SK-N-SH (cell line): ENCODE measurements at regions of chr4 and their contacts with region 1.

Region 1: GRCh38 chr4:8403173-8403753 is 37.3 kb downstream of the ACOX3 start:
- DNase-seq: peak; percentile 96
- H3K4me3 ChIP-seq: no peak overlapping the region
- H3K27ac ChIP-seq: peak overlapping the region in 1 of 2 experiments; percentile 66; a peak in 2 of 4 replicates
- H3K4me1 ChIP-seq: peaks cover 0 to 14% of the 10 kb centered on the region in 2 experiments; a peak in 1 of 4 replicates
- H3K27me3 ChIP-seq: no peaks in the 10 kb centered on the region
- CTCF ChIP-seq: peak; percentile 98
- EP300 ChIP-seq: no peak
- RAD21 ChIP-seq: peak; percentile 99

Region 2: DNA sequence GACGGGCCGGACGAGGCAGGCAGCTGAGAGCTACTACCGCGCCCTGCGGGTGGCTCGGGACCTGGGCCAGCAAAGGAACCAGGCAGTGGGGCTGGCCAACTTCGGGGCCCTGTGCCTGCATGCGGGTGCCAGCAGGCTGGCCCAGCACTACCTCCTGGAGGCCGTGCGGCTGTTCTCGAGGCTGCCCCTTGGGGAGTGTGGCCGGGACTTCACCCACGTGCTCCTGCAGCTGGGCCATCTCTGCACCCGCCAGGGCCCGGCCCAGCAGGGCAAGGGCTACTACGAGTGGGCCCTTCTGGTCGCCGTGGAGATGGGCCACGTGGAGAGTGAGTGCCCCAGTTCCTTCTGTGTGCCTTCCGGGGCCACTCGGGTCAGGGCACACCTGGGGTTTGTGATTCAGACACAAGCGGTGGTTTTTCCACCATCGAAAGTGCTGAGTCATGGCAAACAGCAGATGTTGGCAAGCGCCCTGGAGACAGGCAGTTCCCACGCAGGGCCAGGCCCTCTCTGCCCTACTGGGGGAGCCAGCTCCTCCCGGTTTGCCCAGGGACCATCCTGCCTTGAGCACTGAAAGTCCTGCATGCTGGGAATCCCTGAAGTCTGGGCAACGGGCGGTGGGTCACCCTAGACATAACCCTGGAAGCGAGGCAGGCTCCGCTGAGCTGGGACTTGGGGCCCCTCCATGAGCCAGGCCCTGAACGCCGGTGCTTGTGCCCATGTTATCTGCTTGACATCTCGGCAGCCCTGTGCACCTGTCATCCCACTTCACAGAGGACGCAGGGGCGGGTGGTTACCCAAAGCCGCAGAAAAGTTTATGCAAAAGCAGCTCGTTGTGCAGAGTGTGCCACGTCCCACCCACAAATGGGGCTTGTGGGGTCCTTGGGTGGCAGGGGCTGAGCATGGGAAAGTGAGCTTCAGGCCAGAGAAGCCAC is 174.7 kb before region 1 on chr4:
- CTCF ChIA-PET with region 1: interaction called, 10 read pairs
- POLR2A ChIA-PET with region 1: no interaction called
- DNase-seq: no peak
- H3K4me3 ChIP-seq: no peak overlapping the region
- H3K27ac ChIP-seq: peak overlapping the region in 1 of 2 experiments; percentile 17; a peak in 1 of 4 replicates
- H3K4me1 ChIP-seq: peaks cover 0 to 22% of the 10 kb centered on the region in 2 experiments; a peak in 1 of 4 replicates
- H3K27me3 ChIP-seq: no peaks in the 10 kb centered on the region
- CTCF ChIP-seq: no peak
- EP300 ChIP-seq: no peak
- RAD21 ChIP-seq: no peak

Region 3: GRCh38 chr4:8252301-8253173 is 150.7 kb before region 1 on chr4:
- CTCF ChIA-PET with region 1: interaction called, 12 read pairs
- POLR2A ChIA-PET with region 1: no interaction called
- DNase-seq: no peak
- H3K4me3 ChIP-seq: no peak overlapping the region
- H3K27ac ChIP-seq: no peak overlapping the region
- H3K4me1 ChIP-seq: peaks cover 0 to 7% of the 10 kb centered on the region in 2 experiments; a peak in 1 of 4 replicates
- H3K27me3 ChIP-seq: no peaks in the 10 kb centered on the region
- CTCF ChIP-seq: no peak
- EP300 ChIP-seq: no peak
- RAD21 ChIP-seq: no peak

Region 4: DNA sequence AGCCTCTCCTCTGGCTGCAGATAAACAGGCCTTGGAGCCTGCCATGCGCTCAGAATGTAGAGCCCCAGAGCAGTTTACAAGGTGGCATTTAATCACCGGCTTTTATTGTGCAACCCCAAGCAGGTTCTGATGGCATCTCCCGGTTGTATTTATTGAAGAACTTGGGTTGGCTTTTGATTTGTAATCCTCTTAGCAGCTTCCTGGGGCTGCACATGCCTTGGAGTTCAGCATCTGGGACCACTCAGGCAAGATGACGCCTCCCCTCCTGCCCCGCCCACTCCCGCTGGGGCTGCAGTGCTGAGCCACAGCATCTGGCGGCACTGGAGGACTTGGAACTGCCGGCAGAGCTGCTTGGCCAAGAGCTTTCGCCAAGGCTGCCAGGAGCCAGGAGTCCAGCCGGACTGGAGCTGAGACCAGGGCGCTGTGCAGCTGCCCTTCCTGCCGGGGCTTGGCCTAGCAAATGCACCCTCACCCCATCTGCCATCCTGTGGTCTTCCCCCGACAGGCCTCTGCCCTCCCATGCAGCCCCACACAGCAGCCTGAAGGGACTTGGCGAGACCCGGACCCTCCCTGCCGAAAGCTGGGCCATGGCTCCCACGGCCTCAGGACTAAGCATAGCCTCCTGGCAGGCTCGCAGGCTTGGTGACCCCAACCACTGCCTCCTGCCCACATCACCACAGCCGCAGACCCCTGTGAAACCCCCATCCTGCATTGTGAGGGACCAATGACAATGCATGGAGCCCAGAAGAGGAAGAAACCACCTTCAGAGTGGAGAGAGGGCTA is 128.3 kb before region 1 on chr4:
- CTCF ChIA-PET with region 1: interaction called, 40 read pairs
- POLR2A ChIA-PET with region 1: no interaction called
- DNase-seq: peak; percentile 95
- H3K4me3 ChIP-seq: no peak overlapping the region
- H3K27ac ChIP-seq: peak overlapping the region; percentile 55 to 93; a peak in 3 of 4 replicates
- H3K4me1 ChIP-seq: peaks cover 38 to 39% of the 10 kb centered on the region in 2 experiments
- H3K27me3 ChIP-seq: no peaks in the 10 kb centered on the region
- CTCF ChIP-seq: peak; percentile 60
- EP300 ChIP-seq: peak in 1 of 2 experiments; percentile 43; a peak in 1 of 4 replicates
- RAD21 ChIP-seq: peak; percentile 85

Region 5: DNA sequence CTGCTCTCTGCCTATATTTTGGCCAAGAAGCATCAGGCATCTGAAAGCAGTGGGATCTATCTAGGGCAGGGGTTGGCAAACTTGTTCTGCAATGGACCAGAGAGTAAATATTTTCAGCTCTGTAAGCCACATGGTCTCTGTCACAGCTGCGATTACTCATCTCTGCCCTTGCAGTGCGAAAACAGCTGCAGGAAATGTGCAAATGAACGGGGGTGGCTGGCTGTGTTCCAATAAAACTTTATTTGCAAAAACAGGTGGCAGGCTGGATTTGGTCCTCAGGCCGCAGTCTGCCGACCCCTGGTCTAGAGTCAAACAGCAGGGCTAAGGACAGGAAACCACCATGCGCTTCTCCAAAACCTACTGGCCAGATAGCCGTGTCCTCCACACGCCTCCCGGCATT is 11.3 kb before region 1 on chr4:
- CTCF ChIA-PET with region 1: interaction called, 26 read pairs
- POLR2A ChIA-PET with region 1: no interaction called
- DNase-seq: no peak
- H3K4me3 ChIP-seq: no peak overlapping the region
- H3K27ac ChIP-seq: peak overlapping the region in 1 of 2 experiments; percentile 11; a peak in 1 of 4 replicates
- H3K4me1 ChIP-seq: peaks cover 14 to 44% of the 10 kb centered on the region in 2 experiments
- H3K27me3 ChIP-seq: no peaks in the 10 kb centered on the region
- CTCF ChIP-seq: no peak
- EP300 ChIP-seq: peak in 1 of 2 experiments; percentile 15; a peak in 1 of 4 replicates
- RAD21 ChIP-seq: no peak